AG04449 (cell line): ENCODE measurements at regions of chr1 and their contacts with region 1.

Region 1: GRCh38 chr1:22052115-22053016 is at the start of gene CDC42:
- DNase-seq: peak; percentile 57
- H3K4me3 ChIP-seq: peak within 1 kb of the TSS; percentile 92
- CTCF ChIP-seq: no peak

Region 2: DNA sequence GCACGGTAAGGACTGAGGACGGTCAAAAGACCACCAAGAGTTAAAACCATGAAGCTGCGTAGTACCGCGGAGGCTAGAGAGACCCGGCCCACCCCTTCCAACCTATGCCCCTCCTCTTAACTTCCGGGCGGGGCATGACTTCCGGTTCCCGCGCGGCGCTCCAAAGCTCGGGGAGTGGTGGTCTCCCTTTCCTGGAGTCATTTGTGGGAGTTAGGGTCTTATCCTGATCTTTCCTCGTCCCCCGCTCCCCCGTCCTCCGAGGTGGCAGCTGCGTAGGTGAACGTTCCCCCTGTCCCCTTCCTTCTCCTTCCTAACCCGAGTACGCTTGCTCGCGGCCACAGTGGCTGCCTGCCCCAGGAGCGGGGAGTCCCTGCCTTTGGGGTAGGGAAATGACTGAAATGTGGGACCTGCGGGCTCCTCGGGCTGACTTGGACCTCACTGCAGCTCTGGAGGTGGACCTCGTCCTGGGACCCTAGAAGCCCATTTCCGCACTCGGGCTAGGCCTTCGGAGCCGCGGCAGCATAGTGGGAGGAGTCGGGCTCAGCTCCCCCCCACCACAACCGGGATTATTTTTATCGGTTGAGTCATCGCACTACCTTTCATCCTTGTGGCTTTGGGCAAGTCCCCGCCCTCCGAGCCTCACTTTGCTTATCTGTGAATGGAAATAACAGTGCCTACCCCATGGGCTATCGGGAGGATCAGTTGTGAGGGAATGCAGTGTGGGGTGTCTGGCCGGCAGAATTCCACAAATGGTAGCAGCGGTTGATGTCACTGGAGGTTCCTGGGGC is 26.8 kb before region 1 on chr1:
- CTCF ChIA-PET with region 1: interaction called, 3 read pairs
- POLR2A ChIA-PET with region 1: interaction called, 18 read pairs
- DNase-seq: no peak
- H3K4me3 ChIP-seq: peak overlapping the region; percentile 99
- CTCF ChIP-seq: no peak

Region 3: DNA sequence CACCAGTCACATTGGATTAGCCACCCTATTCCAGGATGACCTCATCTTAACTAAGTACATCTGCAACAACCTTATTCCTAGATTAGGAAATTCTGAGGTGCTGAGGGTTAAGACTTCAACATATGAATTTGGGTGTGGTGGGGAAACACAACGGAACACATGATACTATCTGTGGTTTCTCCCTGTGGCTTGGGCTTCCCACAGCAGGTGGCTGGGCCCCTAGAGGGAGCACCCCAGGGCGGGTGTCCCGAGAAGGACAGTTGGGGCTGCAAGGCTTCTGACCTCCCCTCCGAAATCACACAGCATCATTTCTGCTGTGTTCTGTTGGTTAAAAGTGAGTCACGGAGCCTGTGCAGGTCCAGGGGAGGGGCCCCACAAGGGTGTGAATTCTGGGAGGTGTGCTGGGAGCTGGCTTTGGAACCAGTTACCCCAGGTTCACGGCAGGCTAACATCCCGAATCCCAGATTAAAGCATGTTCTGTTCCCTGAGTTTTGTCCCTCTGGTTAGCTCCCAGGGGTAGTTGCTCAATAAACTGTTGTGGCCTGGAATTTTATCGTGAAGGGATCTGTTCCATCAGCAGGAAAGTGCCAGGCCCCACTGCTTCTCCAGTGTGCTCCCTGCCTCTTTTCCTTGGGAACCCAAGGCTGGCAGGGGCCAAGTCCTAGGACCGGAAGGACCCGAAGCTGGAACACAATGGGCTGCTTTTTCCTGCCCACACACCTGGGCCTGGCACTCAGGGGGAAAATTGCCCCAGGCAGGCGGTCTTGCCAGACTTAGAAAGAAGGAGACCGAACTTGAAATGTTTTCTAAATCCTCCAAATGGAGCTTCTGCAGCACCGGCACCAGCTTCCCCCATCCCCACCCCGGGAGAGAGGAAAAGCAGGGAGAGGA is 244.6 kb after region 1 on chr1:
- CTCF ChIA-PET with region 1: no interaction called
- POLR2A ChIA-PET with region 1: no interaction called
- DNase-seq: no peak
- H3K4me3 ChIP-seq: no peak overlapping the region
- CTCF ChIP-seq: no peak